Activated CD4-positive, alpha-beta T cell treated with anti-CD3 and anti-CD28 coated beads, Interleukin-2, amount 10 ng/mL, durations not matched to agents 24 days and 14 days (primary cell): ENCODE measurements at regions of chr12 and their contacts with region 1.

Region 1: DNA sequence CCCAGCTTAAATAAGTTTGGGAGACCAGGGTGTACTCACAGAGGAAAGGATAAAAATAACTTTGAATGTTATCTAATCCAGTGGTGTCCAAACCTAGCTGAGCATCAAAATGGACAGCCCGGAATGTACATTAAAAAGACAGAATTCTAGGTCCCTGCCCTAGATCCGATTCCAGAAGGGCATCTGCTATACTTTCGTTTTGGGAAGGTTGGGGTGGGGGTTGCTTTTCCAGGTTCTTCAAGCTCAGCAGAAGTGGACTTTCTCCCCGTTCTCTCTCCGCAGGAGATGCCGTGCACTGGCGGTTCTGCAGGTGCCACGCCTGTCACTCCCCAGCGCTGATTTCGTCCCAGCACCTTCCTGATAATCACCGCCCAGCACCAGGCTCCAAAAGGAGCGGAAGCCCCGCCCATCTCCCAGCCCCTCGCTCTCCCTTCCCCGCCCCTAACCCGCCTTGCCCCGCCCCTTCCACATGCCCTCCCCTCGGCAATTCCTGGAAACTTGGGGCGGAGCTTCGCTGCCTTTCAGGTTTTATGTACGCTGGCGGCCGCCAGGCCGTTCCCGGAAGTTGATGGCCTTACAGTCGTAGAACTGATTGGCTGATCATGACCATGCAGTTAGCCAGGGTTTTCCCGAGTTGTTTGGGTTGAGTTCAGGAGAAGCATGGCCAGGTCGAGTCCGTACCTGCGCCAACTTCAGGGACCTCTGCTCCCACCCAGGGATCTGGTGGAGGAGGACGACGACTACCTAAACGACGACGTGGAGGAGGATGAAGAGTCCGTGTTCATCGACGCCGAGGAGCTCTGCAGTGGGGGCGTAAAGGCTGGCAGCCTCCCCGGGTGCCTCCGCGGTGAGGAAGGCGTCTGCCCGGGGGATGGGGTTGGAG is at the start of gene HELB:
- DNase-seq: peak; percentile 98
- H3K4me3 Mint-ChIP-seq: peak within 1 kb of the TSS; percentile 99
- H3K27ac Mint-ChIP-seq: peak within 1 kb of the TSS; percentile 100
- H3K4me1 Mint-ChIP-seq: peaks cover 45% of the 10 kb centered on the region
- H3K27me3 Mint-ChIP-seq: no peaks in the 10 kb centered on the region
- total RNA-seq, gene HELB: 20.2 and 21.4 TPM in 2 replicates

Region 2: DNA sequence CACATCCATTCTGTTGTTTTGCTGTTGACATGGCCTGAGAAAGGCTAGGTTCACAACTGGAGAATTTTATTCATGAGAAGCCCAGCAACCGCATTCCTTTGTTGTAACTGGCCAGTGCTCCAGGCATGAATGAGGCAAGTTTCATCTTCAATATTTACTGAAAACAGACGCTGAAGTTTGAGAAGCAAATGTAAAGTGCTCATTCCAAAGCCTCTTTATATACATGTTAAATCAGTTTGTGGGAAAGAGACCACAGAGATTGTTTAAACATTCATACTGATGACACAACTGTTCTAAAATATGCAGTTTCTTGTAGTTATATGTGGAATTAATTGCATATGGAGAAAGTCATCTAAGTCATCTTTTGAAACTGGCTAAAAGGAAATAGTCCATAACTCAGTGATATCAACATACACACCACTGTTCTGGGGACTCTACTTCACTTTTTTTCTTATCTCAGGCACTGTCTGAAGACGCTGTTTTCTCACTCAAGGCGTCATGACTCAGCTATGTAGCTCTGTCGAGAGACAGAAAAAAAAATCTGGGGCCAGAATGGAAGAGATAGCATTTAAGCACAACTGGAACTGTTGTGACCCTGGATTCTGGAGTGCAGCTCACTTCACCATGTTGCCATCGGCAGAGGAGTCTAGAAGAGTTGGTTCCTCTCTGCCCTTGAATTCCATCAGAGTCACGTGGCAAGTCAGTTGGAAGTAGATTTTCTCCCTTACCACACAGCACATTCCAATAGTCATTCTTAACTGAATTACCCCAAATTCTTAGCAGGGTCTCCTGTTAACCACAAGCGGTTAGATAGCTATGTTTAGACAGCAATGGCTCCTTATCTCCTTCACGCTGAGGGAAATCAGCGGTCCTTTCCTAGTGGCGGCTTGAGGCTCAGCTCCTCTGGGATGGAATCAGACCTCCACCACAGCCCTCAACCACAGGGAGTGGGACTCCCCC is 736.3 kb before region 1 on chr12:
- intact Hi-C with region 1: no loop called
- DNase-seq: no peak
- H3K4me3 Mint-ChIP-seq: no peak overlapping the region
- H3K27ac Mint-ChIP-seq: no peak overlapping the region
- H3K4me1 Mint-ChIP-seq: no peaks in the 10 kb centered on the region
- H3K27me3 Mint-ChIP-seq: peaks cover 8% of the 10 kb centered on the region

Region 3: GRCh38 chr12:65666876-65667275 is 635.3 kb before region 1 on chr12:
- intact Hi-C with region 1: loop called (anchors 10 kb)
- DNase-seq: no peak
- H3K4me3 Mint-ChIP-seq: peak overlapping the region; percentile 10
- H3K27ac Mint-ChIP-seq: peak overlapping the region; percentile 84
- H3K4me1 Mint-ChIP-seq: peaks cover 7% of the 10 kb centered on the region
- H3K27me3 Mint-ChIP-seq: no peaks in the 10 kb centered on the region

Region 4: GRCh38 chr12:66130277-66131066 is 171.7 kb before region 1 on chr12 and contains the start of gene LLPH:
- intact Hi-C with region 1: loop called (anchors 1 kb)
- DNase-seq: peak; percentile 97
- H3K4me3 Mint-ChIP-seq: peak within 1 kb of the TSS; percentile 96
- H3K27ac Mint-ChIP-seq: peak within 1 kb of the TSS; percentile 97
- H3K4me1 Mint-ChIP-seq: peaks cover 32% of the 10 kb centered on the region
- H3K27me3 Mint-ChIP-seq: no peaks in the 10 kb centered on the region
- total RNA-seq, gene LLPH: 33.5 and 35.2 TPM in 2 replicates

Region 5: GRCh38 chr12:66210840-66211239 is 91.3 kb before region 1 on chr12:
- intact Hi-C with region 1: no loop called
- DNase-seq: no peak
- H3K4me3 Mint-ChIP-seq: no peak overlapping the region
- H3K27ac Mint-ChIP-seq: no peak overlapping the region
- H3K4me1 Mint-ChIP-seq: peaks cover 4% of the 10 kb centered on the region
- H3K27me3 Mint-ChIP-seq: peaks cover 21% of the 10 kb centered on the region

Region 6: DNA sequence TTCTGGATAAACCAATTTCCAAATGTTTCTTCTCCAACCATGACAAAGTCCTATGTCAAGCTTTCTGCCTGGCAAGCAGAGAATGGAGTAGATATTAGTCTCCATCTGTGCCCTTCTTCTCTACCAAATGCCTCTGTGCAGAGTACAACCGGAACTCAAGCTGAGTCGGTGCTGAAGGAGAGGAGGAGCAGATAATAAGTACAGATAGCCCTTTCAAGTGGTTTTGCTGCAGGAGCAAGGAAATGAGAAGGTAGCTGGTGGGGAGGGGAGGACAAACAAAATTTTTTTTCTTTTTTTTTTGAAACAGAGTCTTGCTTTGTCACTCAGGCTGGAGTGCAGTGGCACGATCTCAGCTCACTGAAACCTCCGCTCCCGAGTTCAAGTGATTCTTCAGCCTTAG is 14.1 kb before region 1 on chr12:
- intact Hi-C with region 1: loop called (anchors 1 kb)
- DNase-seq: peak; percentile 91
- H3K4me3 Mint-ChIP-seq: peak overlapping the region; percentile 2
- H3K27ac Mint-ChIP-seq: peak overlapping the region; percentile 85
- H3K4me1 Mint-ChIP-seq: peaks cover 60% of the 10 kb centered on the region
- H3K27me3 Mint-ChIP-seq: no peaks in the 10 kb centered on the region